Esophagus muscularis mucosa (tissue), 4 donors: ENCODE measurements at regions of chr4 and their contacts with region 1.

Region 1: GRCh38 chr4:176340871-176341685 is 21.3 kb downstream of the SPCS3 start:
- DNase-seq: no peak
- H3K4me3 ChIP-seq: peak overlapping the region in 2 of 4 donors; percentile 30 to 32
- H3K27ac ChIP-seq: no peak overlapping the region
- H3K4me1 ChIP-seq: peaks cover 0 to 17% (median 7%) of the 10 kb centered on the region in 4 donors
- H3K27me3 ChIP-seq: no peaks in the 10 kb centered on the region
- CTCF ChIP-seq: peak; percentile 35 to 57 (median 55)
- EP300 ChIP-seq: no peak
- POLR2A ChIP-seq: no peak

Region 2: GRCh38 chr4:176034499-176034898 is 306.6 kb before region 1 on chr4:
- intact Hi-C with region 1: loop called (anchors 2 kb)
- DNase-seq: no peak
- H3K4me3 ChIP-seq: no peak overlapping the region
- H3K27ac ChIP-seq: no peak overlapping the region
- H3K4me1 ChIP-seq: peaks cover 0 to 15% (median 10%) of the 10 kb centered on the region in 4 donors
- H3K27me3 ChIP-seq: no peaks in the 10 kb centered on the region
- CTCF ChIP-seq: peak; percentile 48 to 59 (median 56)
- EP300 ChIP-seq: no peak
- POLR2A ChIP-seq: no peak

Region 3: DNA sequence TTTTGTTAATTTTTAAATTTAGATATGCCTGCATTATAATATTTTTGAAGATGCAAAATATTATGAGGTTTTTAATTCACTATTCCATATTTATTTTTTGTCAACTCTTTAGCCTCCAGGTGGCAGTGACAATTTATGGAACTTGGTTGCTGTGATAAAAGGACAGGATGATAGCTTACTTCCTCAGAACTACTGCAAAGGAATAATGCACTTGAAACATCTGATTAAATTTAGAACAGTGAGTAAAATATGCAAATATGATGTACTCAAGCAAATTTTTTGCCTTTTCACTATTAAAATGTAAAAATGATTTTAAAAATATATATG is 190.8 kb before region 1 on chr4:
- intact Hi-C with region 1: loop called (anchors 1 kb)
- DNase-seq: no peak
- H3K4me3 ChIP-seq: no peak overlapping the region
- H3K27ac ChIP-seq: peak overlapping the region in 1 of 4 donors; percentile 37
- H3K4me1 ChIP-seq: peaks cover 0 to 12% (median 6%) of the 10 kb centered on the region in 4 donors
- H3K27me3 ChIP-seq: no peaks in the 10 kb centered on the region
- CTCF ChIP-seq: peak; percentile 47 to 49 (median 49)
- EP300 ChIP-seq: no peak
- POLR2A ChIP-seq: no peak

Region 4: GRCh38 chr4:176584031-176584606 is 243.0 kb after region 1 on chr4:
- intact Hi-C with region 1: no loop called
- DNase-seq: no peak
- H3K4me3 ChIP-seq: no peak overlapping the region
- H3K27ac ChIP-seq: no peak overlapping the region
- H3K4me1 ChIP-seq: no peaks in the 10 kb centered on the region
- H3K27me3 ChIP-seq: no peaks in the 10 kb centered on the region
- CTCF ChIP-seq: no peak
- EP300 ChIP-seq: no peak
- POLR2A ChIP-seq: no peak